Mammary epithelial cell (primary cell): ENCODE measurements at regions of chr13 and their contacts with region 1.

Region 1: DNA sequence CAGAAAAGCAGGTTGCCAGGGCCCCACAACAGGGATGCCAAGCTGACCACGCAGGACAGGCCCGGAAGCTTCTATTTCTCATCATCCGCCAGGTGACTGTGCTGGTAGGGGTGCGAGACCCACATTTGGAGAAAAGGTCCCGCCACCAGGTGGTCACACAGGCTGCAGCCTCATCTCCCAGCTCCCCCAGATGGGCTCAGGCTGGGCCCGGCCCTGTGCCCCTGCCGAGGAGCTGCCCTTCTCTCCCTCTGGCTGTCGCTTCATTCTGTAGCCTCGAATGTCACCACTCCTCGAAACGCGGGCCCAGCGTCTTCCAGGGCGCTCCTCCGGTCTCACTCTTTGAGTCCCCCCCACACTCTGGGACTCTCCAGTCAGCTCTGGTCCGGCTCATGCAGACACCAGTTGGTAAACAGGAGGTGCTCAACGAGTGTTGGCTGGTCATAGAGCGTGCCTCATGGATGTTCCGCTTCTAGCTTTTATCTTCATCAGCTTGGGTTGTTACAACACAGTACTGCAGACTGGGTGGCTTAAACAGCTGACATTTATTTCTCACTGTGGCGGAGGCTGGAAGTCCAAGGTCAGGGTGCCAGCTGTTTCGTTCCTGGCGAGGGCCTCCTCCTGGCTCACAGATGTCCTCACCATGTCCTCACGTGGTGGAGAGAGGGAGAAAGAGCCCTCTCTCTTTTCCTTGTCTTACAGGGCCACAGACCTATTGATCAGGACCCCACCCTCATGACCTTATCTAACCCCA is 87.1 kb downstream of the TEX29 start:
- DNase-seq: no peak
- H3K4me3 ChIP-seq: no peak overlapping the region
- H3K27ac ChIP-seq: no peak overlapping the region
- H3K4me1 ChIP-seq: no peaks in the 10 kb centered on the region
- H3K27me3 ChIP-seq: peaks cover 18% of the 10 kb centered on the region
- CTCF ChIP-seq: no peak

Region 2: GRCh38 chr13:111304041-111304544 is 103.5 kb before region 1 on chr13:
- CTCF ChIA-PET with region 1: no interaction called
- dilution Hi-C with region 1: loop called (anchors 5 kb)
- in situ Hi-C with region 1: no loop called
- intact Hi-C with region 1: no loop called
- DNase-seq: no peak
- H3K4me3 ChIP-seq: no peak overlapping the region
- H3K27ac ChIP-seq: no peak overlapping the region
- H3K4me1 ChIP-seq: no peaks in the 10 kb centered on the region
- H3K27me3 ChIP-seq: no peaks in the 10 kb centered on the region
- CTCF ChIP-seq: no peak